Aorta (tissue), 5 donors: ENCODE measurements at regions of chr1 and their contacts with region 1.

Region 1: GRCh38 chr1:227318003-227318852 is at the start of gene CDC42BPA:
- DNase-seq: peak; percentile 89 to 93
- ATAC-seq: peak; percentile 92
- H3K4me3 ChIP-seq: peak within 1 kb of the TSS; percentile 97 to 99
- H3K27ac ChIP-seq: peak within 1 kb of the TSS; percentile 64 to 73
- H3K4me1 ChIP-seq: no peaks in the 10 kb centered on the region
- H3K27me3 ChIP-seq: no peaks in the 10 kb centered on the region
- total RNA-seq, gene CDC42BPA: 50.5 to 71.3 TPM

Region 2: DNA sequence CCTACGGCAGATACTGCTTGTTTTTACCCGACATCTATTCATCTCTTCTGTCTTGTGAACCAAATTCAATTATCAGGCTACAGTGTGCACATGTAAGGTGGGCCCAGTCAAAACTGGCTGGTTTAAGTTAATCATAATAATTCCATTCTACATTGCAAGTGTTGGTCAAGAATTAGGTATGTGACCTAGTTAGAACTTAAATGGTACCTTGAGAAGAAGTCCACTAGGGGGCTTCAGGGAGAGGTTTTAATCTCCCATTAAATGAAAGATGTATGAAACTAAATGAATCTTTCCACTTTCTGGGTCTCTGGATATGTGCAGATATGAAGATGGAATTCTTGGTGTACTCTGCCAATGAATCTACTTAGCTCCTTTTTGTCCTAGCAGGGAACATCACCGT is 187.0 kb before region 1 on chr1:
- intact Hi-C with region 1: loop called in 1 of 2 experiments (anchors 10 kb)
- DNase-seq: no peak
- ATAC-seq: no peak
- H3K4me3 ChIP-seq: no peak overlapping the region
- H3K27ac ChIP-seq: no peak overlapping the region
- H3K4me1 ChIP-seq: no peaks in the 10 kb centered on the region
- H3K27me3 ChIP-seq: no peaks in the 10 kb centered on the region

Region 3: GRCh38 chr1:227214207-227214606 is 104.0 kb before region 1 on chr1:
- intact Hi-C with region 1: no loop called
- DNase-seq: no peak
- ATAC-seq: no peak
- H3K4me3 ChIP-seq: no peak overlapping the region
- H3K27ac ChIP-seq: no peak overlapping the region
- H3K4me1 ChIP-seq: no peaks in the 10 kb centered on the region
- H3K27me3 ChIP-seq: no peaks in the 10 kb centered on the region

Region 4: GRCh38 chr1:227465256-227465655 is 147.0 kb after region 1 on chr1:
- intact Hi-C with region 1: no loop called
- DNase-seq: no peak
- ATAC-seq: no peak
- H3K4me3 ChIP-seq: no peak overlapping the region
- H3K27ac ChIP-seq: no peak overlapping the region
- H3K4me1 ChIP-seq: no peaks in the 10 kb centered on the region
- H3K27me3 ChIP-seq: no peaks in the 10 kb centered on the region